OCI-LY7 (cell line): ENCODE measurements at regions of chr2 and their contacts with region 1.

Region 1: GRCh38 chr2:104412384-104412783 is 441.5 kb upstream of the POU3F3 start:
- DNase-seq: peak; percentile 45
- H3K4me3 ChIP-seq: no peak overlapping the region
- H3K27ac ChIP-seq: no peak overlapping the region
- H3K4me1 ChIP-seq: no peaks in the 10 kb centered on the region
- CTCF ChIP-seq: peak; percentile 86

Region 2: GRCh38 chr2:104033399-104033798 is 379.0 kb before region 1 on chr2:
- CTCF ChIA-PET with region 1: no interaction called
- POLR2A ChIA-PET with region 1: no interaction called
- intact Hi-C with region 1: loop called (anchors 1 kb)
- DNase-seq: peak; percentile 35
- H3K4me3 ChIP-seq: no peak overlapping the region
- H3K27ac ChIP-seq: no peak overlapping the region
- H3K4me1 ChIP-seq: no peaks in the 10 kb centered on the region
- CTCF ChIP-seq: peak; percentile 82